PC-3 (cell line): ENCODE measurements at regions of chr10 and their contacts with region 1.

Region 1: DNA sequence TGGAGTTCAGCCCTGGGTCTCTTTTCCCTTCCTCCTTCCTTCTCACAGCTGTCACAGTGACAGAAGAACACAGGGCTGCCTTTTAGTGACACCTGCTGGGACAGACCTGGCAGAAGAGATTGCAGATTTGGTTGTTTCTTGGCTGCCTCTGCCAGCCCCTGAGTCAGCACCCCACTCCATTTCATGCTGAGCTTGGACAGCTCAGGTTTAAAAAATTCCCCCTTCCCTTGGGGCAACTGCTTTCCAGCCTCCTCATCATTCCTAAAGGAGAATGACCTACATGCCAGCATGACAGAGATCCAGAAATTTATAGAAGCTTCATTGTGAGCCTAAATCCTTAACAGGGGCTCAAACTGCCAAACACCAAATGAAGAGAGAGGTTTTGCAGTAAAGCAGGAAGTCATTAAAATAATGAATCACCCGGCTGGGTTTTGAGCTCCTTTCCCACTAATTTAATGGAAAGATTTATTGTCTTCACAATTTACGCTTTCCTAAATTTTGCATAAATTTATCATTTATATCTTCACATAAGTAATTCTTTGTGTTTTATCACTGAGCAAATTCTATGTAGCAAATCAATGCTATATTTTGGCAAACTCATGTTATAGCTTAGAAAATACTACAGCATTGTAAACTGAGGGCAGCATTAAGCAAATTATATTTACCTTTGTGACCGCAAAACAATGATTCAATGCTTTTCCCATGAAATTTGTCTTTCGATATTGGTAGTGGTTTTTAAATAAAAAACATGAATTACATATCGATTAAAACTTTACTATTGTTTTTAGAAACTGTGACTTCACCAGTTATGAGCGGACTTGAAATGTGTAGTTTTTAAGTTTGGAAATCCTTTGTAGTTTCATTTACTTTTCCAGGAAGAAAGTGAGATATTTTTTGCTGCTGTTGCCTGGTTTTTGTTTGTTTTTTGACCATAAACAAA is 399.5 kb upstream of the ANKRD30A start:
- DNase-seq: peak; percentile 100
- ATAC-seq: peak; percentile 91
- H3K4me3 ChIP-seq: peak overlapping the region; percentile 49
- H3K27ac ChIP-seq: peak overlapping the region; percentile 86
- H3K4me1 ChIP-seq: peaks cover 43% of the 10 kb centered on the region
- H3K27me3 ChIP-seq: no peaks in the 10 kb centered on the region
- CTCF ChIP-seq: peak; percentile 100

Region 2: GRCh38 chr10:35613597-35614226 is 1112.1 kb before region 1 on chr10:
- CTCF ChIA-PET with region 1: interaction called, 27 read pairs
- POLR2A ChIA-PET with region 1: no interaction called
- intact Hi-C with region 1: no loop called
- DNase-seq: peak; percentile 92
- ATAC-seq: peak; percentile 96
- H3K4me3 ChIP-seq: no peak overlapping the region
- H3K27ac ChIP-seq: no peak overlapping the region
- H3K4me1 ChIP-seq: peaks cover 8% of the 10 kb centered on the region
- H3K27me3 ChIP-seq: no peaks in the 10 kb centered on the region
- CTCF ChIP-seq: peak; percentile 100

Region 3: DNA sequence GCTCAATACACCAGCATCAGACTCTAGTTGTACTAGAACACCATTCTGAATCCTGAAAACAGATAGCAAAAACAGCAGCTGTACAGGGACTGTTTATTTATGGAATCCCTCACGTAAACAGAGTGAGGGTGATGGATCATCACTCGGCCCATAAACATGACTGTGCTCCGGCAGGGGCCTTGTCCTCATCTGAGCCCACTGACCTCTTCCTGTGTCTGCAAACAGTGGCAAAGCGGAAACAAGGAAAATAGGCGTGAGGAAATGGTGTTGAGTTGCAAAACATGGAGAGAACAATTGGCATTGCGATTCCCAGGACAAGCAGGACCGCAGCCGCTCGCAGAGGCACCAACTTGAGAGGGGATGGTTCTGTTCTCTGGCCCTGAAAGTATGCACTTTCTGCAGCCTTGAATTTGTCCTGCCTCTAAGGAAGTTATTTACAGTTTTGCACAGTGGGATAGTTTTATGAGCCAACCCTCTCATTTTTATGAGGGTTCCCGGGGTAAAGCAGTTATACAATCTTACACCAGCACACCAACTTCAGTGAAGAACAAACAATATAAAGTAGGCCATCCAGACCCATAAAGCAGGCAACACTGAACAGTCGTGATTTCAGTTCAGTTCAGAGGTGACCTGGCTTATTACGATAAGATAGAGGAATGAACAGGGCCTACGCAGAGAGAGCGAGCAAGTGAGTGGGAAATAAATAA is 835.7 kb before region 1 on chr10:
- CTCF ChIA-PET with region 1: no interaction called
- POLR2A ChIA-PET with region 1: interaction called, 3 read pairs
- intact Hi-C with region 1: loop called (anchors 1 kb)
- DNase-seq: peak; percentile 74
- ATAC-seq: peak; percentile 90
- H3K4me3 ChIP-seq: no peak overlapping the region
- H3K27ac ChIP-seq: peak overlapping the region; percentile 38
- H3K4me1 ChIP-seq: peaks cover 25% of the 10 kb centered on the region
- H3K27me3 ChIP-seq: no peaks in the 10 kb centered on the region
- CTCF ChIP-seq: no peak

Region 4: DNA sequence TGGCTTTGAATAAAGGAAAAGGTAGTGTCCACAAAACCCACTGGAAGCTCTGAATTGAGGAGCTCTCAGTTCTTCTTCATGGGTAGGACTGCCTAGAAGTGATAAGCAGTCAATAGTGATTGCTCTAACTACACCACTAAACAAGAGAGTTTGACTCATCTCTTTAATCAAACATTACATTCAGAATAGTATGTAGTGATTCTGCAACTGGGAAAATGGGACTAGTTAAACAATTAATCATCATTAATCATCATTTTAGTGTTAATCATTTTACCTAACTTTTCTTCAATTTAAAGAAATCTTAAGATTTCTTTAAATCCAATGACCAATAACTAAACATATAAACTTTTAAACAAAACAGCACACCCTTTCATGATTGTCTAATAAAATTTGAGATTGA is 599.8 kb before region 1 on chr10:
- CTCF ChIA-PET with region 1: interaction called, 3 read pairs
- POLR2A ChIA-PET with region 1: no interaction called
- intact Hi-C with region 1: loop called (anchors 1 kb)
- DNase-seq: peak; percentile 96
- ATAC-seq: peak; percentile 98
- H3K4me3 ChIP-seq: no peak overlapping the region
- H3K27ac ChIP-seq: peak overlapping the region; percentile 55
- H3K4me1 ChIP-seq: peaks cover 24% of the 10 kb centered on the region
- H3K27me3 ChIP-seq: no peaks in the 10 kb centered on the region
- CTCF ChIP-seq: no peak

Region 5: DNA sequence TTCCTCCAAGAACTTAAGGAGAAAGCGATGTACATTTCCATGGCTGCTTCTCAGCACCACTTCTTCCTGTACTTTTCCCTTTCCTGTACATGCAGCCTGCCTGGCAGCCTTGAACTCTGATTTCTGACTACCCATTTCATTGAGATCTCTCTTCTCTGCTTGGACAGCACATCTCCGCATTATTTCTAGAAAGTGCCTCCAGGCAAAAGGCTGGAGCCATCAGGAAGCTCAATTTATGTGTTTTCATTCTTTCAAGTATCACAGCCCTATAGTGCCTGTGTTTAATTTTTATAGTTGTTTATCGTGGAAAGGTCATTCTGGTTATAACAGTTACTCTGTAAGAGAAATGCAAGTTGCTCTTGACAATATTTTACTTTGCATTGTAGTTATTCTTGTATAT is 288.5 kb before region 1 on chr10:
- CTCF ChIA-PET with region 1: no interaction called
- POLR2A ChIA-PET with region 1: no interaction called
- intact Hi-C with region 1: no loop called
- DNase-seq: peak; percentile 39
- ATAC-seq: peak; percentile 55
- H3K4me3 ChIP-seq: no peak overlapping the region
- H3K27ac ChIP-seq: no peak overlapping the region
- H3K4me1 ChIP-seq: peaks cover 8% of the 10 kb centered on the region
- H3K27me3 ChIP-seq: no peaks in the 10 kb centered on the region
- CTCF ChIP-seq: no peak

Region 6: DNA sequence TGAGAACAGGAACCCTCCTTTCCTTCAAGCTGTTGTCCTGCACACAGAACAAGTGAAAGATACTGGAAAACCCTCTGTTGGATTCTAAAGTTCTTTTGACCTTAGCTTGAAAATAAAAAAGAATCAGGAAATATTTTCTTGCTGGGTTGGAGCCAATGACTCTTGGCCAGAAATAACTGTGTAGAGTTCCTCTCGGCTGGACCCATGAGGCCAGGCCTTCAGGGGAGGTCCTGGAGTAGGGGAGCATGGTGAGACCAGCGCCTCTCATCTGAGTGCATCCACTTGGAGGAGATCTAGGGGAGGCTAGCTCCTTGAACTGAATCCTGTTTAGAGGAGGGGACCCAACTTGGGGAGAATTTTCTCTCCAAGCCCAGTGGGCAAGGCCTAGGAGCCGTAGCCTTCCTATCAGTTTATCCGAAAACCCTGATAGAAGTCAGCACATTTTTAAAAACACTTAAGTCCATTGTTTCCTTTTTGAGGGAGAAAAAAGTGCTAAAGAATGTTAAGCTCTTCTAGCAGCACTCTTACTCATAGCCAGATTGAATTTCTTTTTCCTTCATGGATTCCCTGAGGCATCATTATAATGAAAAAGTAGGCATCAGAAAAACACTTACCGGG is 236.1 kb before region 1 on chr10:
- CTCF ChIA-PET with region 1: interaction called, 30 read pairs
- POLR2A ChIA-PET with region 1: no interaction called
- intact Hi-C with region 1: loop called (anchors 1 kb)
- DNase-seq: peak; percentile 96
- ATAC-seq: peak; percentile 9
- H3K4me3 ChIP-seq: no peak overlapping the region
- H3K27ac ChIP-seq: peak overlapping the region; percentile 83
- H3K4me1 ChIP-seq: peaks cover 55% of the 10 kb centered on the region
- H3K27me3 ChIP-seq: no peaks in the 10 kb centered on the region
- CTCF ChIP-seq: no peak

Region 7: DNA sequence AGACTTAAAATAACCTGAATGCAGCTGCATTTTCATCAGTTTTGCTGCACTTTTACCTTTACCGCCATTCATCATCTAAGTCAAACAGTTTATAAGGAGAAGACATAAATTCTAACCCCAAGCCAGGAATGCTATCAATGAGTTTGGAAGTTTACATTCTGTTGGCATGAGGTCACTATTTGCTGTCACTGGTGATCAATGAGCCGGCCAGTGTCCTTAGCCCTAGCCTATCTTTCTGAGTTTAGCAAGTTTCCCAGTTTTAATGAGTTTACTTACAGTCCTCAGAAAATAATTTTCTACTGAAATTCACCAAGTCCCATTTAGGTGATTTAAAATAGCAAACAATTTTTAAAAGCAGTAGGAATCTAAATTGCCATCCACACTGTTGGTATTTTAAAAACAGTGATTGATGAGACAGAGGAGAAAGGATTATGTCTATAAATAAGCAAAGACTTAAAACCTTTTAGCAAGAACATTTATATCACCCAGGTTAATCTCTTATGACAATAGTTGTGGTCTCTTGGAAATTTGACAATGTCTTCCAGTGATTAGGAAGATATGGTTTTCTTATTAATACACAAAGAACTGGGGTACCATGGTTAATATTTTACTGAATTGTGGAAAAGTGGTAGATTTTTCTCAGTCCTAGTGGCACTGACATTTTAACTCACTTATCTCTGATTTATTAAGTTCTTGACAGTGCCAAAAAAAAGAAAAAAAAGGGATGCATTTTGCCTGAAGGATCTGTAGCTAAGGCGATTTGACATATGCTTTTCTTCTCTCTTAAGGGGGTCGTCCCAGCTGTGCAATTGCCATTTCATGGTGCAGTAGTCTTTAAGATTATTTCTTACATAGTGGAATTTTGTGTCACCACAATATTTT is 43.9 kb before region 1 on chr10:
- CTCF ChIA-PET with region 1: interaction called, 25 read pairs
- POLR2A ChIA-PET with region 1: interaction called, 4 read pairs
- intact Hi-C with region 1: no loop called
- DNase-seq: peak; percentile 65
- ATAC-seq: no peak
- H3K4me3 ChIP-seq: no peak overlapping the region
- H3K27ac ChIP-seq: no peak overlapping the region
- H3K4me1 ChIP-seq: peaks cover 20% of the 10 kb centered on the region
- H3K27me3 ChIP-seq: no peaks in the 10 kb centered on the region
- CTCF ChIP-seq: no peak

Region 8: GRCh38 chr10:36880898-36881297 is 155.0 kb after region 1 on chr10:
- CTCF ChIA-PET with region 1: interaction called, 15 read pairs
- POLR2A ChIA-PET with region 1: no interaction called
- intact Hi-C with region 1: loop called (anchors 1 kb)
- DNase-seq: peak; percentile 93
- ATAC-seq: peak; percentile 86
- H3K4me3 ChIP-seq: no peak overlapping the region
- H3K27ac ChIP-seq: no peak overlapping the region
- H3K4me1 ChIP-seq: no peaks in the 10 kb centered on the region
- H3K27me3 ChIP-seq: 0 out of 2 replicates have a peak, but pooled peaks cover 3% of the 10 kb centered on the region
- CTCF ChIP-seq: peak; percentile 86